ENCODE measurements at regions of chrX and their contacts with region 1.

Region 1: DNA sequence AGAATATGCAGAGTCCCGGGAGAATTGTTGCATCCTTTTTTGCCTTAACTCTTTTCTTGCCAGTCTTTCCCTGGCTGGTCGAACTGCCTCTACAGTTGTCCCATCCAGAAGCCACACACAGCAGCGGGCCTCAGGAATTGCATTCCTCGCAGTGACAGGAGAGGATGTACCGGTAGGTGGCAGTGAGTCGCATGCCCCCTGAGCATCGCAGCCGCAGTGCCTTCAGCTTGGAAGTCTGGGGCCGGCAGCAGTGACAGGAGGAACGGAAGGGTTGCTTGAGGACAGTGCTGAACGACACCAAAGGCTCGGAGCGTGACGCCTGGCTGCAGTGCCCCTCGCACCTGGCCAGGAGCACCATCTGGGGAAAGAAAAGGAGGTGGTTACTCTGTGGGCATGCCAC is 23.5 kb downstream of the NDP start:
- DNase-seq: peak; percentile 46
- ATAC-seq: peak; percentile 57; the same call in 1 of the 2 replicates
- H3K4me3 ChIP-seq: no peak overlapping the region
- H3K27ac ChIP-seq: no peak overlapping the region
- H3K4me1 ChIP-seq: no peaks in the 10 kb centered on the region
- H3K27me3 ChIP-seq: no peaks in the 10 kb centered on the region
- CTCF ChIP-seq: peak; percentile 59

Region 2: GRCh38 chrX:43974741-43975465 is 25.2 kb after region 1 on chrX:
- CTCF ChIA-PET with region 1: no interaction called
- POLR2A ChIA-PET with region 1: interaction called, 15 read pairs
- intact Hi-C with region 1: no loop called
- DNase-seq: peak; percentile 16
- ATAC-seq: no peak
- H3K4me3 ChIP-seq: no peak overlapping the region; the same call in 1 of the 2 replicates
- H3K27ac ChIP-seq: peak overlapping the region; percentile 37
- H3K4me1 ChIP-seq: peaks cover 42% of the 10 kb centered on the region
- H3K27me3 ChIP-seq: no peaks in the 10 kb centered on the region
- CTCF ChIP-seq: no peak